ENCODE measurements at regions of chr7 and their contacts with region 1.

Region 1: DNA sequence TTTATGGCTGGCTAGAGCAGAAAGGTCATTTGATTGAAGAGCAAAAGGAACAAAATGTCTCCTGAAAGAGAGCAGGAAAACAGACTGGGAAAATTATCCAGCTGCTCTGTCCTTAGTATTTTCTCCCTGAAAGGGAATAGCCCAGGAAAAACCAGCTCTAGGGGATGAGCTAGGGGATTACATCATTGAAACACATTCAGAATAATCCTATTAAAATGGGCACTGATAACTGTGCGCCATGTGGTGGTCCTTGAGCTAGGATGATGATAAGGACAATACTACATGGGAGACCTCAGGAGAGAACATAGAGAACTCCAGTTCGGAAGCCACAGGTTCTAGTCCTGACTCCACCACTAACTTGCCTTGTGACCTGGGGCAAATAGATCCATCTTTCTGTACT is 873.8 kb downstream of the TYW1 start:
- DNase-seq: no peak
- H3K4me3 ChIP-seq: no peak overlapping the region
- H3K27ac ChIP-seq: no peak overlapping the region
- H3K4me1 ChIP-seq: no peaks in the 10 kb centered on the region
- H3K27me3 ChIP-seq: no peaks in the 10 kb centered on the region
- CTCF ChIP-seq: no peak
- EP300 ChIP-seq: no peak
- POLR2A ChIP-seq: no peak

Region 2: DNA sequence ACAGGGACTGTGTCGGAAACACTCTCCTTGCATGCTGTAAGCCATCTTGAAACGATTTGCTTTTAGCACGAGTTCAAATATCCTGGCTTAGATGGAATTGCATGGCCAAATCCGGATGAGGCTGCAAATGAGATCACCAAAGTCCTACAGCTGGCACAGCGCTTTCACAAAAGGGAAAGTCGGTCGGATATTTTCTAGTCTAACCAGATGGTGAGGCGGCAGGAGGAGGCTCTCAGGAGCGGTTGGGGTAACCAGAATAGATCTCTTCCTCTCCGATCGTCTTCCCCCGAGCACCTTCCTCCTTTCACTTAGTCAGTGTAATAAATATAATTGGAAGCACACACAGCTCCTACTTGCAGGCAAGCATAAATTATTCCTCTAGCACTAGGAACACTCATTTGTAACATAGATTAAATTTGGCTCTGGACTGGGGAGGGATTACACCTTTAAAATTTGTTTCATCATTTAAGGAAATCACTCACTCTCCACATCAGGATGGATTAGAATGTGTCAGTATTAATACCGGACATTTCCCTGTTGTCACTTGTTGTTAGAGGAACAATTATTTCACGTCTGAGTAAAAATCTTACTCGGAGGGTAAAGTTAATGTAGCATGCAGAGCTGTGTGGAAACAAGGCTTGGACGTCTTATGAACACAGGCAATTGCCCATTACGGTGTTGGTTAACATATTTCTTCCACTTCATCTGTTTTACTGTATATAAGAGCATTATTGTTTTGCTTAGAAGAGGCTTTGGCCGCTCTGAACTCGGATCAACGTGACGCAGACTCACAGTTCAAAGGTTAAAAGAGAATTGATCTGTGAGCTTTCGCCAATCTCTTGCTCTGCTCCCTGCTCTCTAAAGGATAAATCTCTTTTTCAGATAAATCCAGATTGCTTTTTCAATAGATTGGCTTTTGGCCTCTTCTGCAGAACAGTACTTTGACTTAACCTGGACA is 15.9 kb before region 1 on chr7:
- in situ Hi-C with region 1: no loop called
- intact Hi-C with region 1: no loop called
- DNase-seq: no peak
- H3K4me3 ChIP-seq: no peak overlapping the region
- H3K27ac ChIP-seq: no peak overlapping the region
- H3K4me1 ChIP-seq: no peaks in the 10 kb centered on the region
- H3K27me3 ChIP-seq: no peaks in the 10 kb centered on the region
- CTCF ChIP-seq: no peak
- EP300 ChIP-seq: no peak
- POLR2A ChIP-seq: no peak

Region 3: DNA sequence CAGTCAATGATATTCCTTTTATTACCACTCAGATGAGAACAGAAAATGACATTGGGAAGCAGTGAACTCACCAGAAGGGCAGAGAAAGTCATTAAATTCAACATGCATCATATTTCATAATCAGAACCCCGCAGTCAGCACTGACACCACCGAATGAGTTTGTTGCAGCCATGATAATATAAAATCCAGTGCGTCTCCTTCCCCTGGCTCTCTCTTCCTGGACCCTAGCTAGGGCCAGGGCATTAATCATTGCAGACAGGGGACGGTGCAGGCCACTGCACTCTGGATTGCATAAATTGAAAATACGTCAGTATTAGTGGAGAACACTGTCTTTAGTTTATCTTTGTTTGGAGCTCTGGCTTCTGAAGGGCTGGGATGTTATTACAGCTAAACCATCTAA is 57.7 kb after region 1 on chr7:
- in situ Hi-C with region 1: no loop called
- intact Hi-C with region 1: loop called (anchors 2 kb)
- DNase-seq: no peak
- H3K4me3 ChIP-seq: no peak overlapping the region
- H3K27ac ChIP-seq: no peak overlapping the region
- H3K4me1 ChIP-seq: no peaks in the 10 kb centered on the region
- H3K27me3 ChIP-seq: no peaks in the 10 kb centered on the region
- CTCF ChIP-seq: no peak
- EP300 ChIP-seq: no peak
- POLR2A ChIP-seq: no peak

Region 4: GRCh38 chr7:68288144-68288593 is 417.8 kb after region 1 on chr7:
- in situ Hi-C with region 1: no loop called
- intact Hi-C with region 1: no loop called
- DNase-seq: no peak
- H3K4me3 ChIP-seq: no peak overlapping the region
- H3K27ac ChIP-seq: no peak overlapping the region
- H3K4me1 ChIP-seq: no peaks in the 10 kb centered on the region
- H3K27me3 ChIP-seq: no peaks in the 10 kb centered on the region
- CTCF ChIP-seq: no peak
- EP300 ChIP-seq: no peak
- POLR2A ChIP-seq: no peak

Measured in transverse colon (tissue), 4 donors.